ENCODE measurements at regions of chr4 and their contacts with region 1.

Region 1: GRCh38 chr4:4462970-4463369 is 76.1 kb downstream of the NSG1 start:
- DNase-seq: no peak
- H3K4me3 ChIP-seq: no peak overlapping the region
- CTCF ChIP-seq: no peak
- POLR2A ChIP-seq: no peak

Region 2: DNA sequence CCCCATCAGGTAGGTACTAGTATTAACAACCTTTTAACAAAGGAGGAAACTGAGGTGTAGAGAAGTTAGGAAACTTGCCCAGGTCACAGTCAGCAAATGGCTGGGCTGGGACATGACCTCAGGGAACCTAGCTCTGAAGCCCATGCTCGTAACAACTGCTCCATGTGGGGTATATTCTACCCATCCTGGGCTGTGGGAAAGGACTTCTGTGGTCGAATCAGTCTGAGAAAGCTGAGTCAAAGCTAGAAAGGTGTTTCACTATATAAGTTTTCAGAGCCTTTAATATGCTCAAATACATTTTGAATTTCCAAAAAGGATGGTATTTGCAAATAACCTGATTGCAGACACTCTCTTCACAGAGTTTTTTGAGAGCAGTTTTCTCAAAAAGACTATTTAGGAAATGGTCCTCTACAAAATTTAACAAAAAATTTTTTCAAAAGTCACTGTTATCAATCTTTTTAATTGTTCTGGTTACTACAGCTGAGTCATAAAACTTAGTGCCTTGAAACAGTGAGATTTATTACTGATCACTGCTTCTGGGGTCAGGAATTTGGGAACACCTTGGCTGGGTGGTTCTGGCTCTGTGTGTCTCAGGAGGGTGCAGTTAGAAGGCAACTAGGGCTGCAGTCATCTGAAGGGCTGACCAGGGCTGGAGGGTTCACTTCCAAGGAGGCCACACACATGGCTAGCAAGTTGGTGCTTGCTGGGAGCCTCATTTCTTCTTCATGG is 22.5 kb before region 1 on chr4:
- intact Hi-C with region 1: loop called (anchors 1 kb)
- DNase-seq: no peak
- H3K4me3 ChIP-seq: no peak overlapping the region
- CTCF ChIP-seq: no peak
- POLR2A ChIP-seq: no peak

Region 3: DNA sequence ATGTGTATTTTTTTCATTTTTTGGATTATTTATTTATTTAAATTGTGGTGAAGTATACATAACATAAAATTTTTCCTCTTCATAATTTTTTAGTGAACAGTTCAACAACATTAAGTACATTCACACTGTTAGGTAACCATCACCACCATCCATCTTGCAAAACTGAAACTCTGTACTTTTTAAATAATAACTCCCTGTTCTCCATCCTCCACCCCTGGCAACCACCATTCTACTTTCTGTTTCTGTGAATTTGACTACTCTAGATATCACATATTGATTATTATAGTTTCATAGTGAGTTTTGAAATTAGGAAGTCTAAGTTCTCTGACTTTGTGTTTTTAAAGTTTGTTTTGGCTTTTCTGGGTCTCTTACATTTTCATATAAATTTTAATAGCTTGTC is 168.2 kb after region 1 on chr4:
- intact Hi-C with region 1: no loop called
- DNase-seq: no peak
- H3K4me3 ChIP-seq: no peak overlapping the region
- CTCF ChIP-seq: no peak
- POLR2A ChIP-seq: no peak

Measured in lower leg skin (tissue), 4 donors.